OCI-LY7 (cell line): ENCODE measurements at regions of chr5 and their contacts with region 1.

Region 1: GRCh38 chr5:41967852-41968719 is 43.0 kb downstream of the FBXO4 start:
- DNase-seq: no peak
- H3K4me3 ChIP-seq: no peak overlapping the region
- H3K27ac ChIP-seq: no peak overlapping the region
- H3K4me1 ChIP-seq: no peaks in the 10 kb centered on the region
- CTCF ChIP-seq: peak; percentile 46; the same call in 1 of the 2 replicates

Region 2: GRCh38 chr5:42168091-42168670 is 200.1 kb after region 1 on chr5:
- CTCF ChIA-PET with region 1: no interaction called
- POLR2A ChIA-PET with region 1: no interaction called
- intact Hi-C with region 1: loop called (anchors 10 kb)
- DNase-seq: no peak
- H3K4me3 ChIP-seq: no peak overlapping the region
- H3K27ac ChIP-seq: no peak overlapping the region
- H3K4me1 ChIP-seq: no peaks in the 10 kb centered on the region
- CTCF ChIP-seq: no peak